Right ventricle myocardium inferior (tissue), 1 donor: ENCODE measurements at regions of chr5 and their contacts with region 1.

Region 1: GRCh38 chr5:132426525-132427138 is 57.1 kb downstream of the SLC22A5 start:
- DNase-seq: peak; percentile 90
- ATAC-seq: peak; percentile 55

Region 2: DNA sequence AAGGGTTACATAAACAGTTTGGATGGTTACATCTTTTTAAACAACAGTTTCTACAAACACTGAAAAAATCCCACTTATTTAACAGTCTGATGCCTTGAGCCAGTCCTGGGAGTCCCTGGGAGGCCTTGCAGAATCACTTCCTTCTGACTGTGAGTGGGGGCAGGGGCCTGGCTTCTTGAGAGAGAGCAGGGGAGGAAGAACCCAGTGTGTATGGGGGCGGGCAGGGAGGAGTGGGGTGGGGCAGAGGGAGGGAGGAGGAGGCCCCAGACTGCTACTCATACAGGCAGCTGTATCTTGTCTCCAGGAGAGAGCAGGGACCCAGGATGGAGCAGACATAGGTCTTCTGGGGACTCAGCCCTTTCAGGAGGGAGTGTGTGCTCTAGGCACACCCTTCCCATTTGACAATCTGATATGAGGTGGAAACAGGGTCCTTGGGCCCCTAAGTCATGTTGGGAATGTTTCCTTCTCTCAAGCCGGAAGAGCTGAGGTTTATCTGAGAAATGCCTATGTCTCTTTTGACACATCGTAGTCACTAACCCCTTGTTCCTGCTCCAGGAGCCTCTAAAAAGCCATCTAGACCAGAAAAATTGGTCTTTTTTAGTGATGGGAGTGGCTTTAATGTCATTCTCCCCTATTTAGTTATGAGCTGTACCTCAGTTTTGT is 11.1 kb after region 1 on chr5:
- intact Hi-C with region 1: loop called (anchors 2 kb)
- DNase-seq: peak; percentile 93
- ATAC-seq: peak; percentile 73

Region 3: DNA sequence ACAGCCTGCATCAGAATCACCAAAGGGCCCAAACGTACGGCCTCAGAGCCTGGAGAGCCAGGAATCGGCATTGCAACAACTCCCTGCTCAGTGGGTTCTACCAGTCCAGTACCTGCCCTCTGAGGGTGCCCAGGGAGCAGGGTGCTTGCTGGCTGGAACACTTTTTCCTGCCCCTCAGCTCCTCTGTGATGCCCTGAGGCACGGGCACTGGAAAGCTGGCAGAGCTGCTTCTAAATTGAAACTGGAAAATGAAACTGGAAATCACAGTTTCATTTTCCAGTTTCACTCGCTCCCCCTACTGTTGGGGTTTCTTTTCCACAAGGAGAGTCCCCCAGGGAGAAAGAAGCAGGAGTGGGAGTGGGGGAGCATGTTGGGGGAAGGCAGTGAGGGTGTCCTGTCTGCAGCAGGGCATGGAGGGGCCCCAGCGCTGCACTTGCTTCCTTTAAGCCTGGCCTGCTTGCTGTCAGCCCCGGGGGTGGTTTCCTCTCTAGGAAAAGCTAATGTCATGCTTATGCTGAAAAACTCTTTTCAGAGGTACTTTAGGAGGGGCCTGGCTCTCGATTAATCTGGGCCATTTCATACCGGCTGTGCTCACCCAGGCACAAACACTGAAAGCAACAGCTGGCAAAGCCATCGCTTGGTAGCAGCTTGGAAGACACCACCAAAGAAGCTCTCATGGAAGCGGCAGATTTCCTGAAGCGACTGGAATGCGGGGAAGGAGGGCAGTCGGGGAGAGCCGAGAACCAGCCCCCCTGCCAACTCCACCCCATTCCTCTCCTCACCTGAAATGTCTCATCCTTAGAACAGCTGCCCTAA is 37.7 kb after region 1 on chr5:
- intact Hi-C with region 1: loop called (anchors 5 kb)
- DNase-seq: no peak
- ATAC-seq: no peak

Region 4: GRCh38 chr5:132476876-132477781 is 50.5 kb after region 1 on chr5:
- intact Hi-C with region 1: loop called (anchors 5 kb)
- DNase-seq: no peak
- ATAC-seq: no peak